Ascending aorta (tissue), 2 donors: ENCODE measurements at regions of chr17 and their contacts with region 1.

Region 1: DNA sequence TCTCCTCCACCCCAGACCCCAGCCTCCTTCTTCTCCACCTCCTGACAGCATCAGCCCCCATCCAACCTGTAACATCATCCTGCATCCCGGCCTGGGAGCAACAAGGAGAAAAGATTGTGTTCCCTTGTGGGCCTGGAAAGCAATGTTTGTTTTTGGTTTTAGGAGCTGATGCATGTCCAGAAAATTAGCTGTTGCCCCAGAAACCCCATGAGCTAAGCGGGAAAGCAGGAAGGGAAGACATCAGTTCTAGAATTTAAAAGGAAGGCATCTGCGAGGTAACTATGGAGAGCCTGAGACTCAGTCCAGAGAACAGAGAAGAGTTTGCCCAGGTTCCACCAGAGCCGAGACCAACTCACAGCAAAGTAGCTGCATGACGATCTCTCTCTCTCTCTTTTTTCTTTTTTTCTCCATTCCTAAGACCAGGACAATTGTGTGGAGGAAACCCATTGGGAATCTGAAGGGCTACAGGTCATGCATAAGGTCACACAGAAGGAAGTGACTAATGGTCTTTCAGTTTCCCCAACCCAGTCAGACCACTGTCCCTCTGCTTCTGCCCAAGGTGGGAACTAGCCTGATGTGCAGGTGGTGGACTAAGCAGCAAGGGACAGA is 124.4 kb downstream of the SLC39A11 start:
- DNase-seq: no peak
- H3K4me3 ChIP-seq: no peak overlapping the region
- H3K27ac ChIP-seq: no peak overlapping the region
- H3K4me1 ChIP-seq: no peaks in the 10 kb centered on the region
- H3K27me3 ChIP-seq: no peaks in the 10 kb centered on the region
- CTCF ChIP-seq: no peak

Region 2: GRCh38 chr17:73028299-73028755 is 60.2 kb after region 1 on chr17:
- intact Hi-C with region 1: loop called (anchors 10 kb)
- DNase-seq: no peak
- H3K4me3 ChIP-seq: no peak overlapping the region
- H3K27ac ChIP-seq: no peak overlapping the region
- H3K4me1 ChIP-seq: no peaks in the 10 kb centered on the region
- H3K27me3 ChIP-seq: no peaks in the 10 kb centered on the region
- CTCF ChIP-seq: no peak

Region 3: GRCh38 chr17:73096866-73097265 is 128.8 kb after region 1 on chr17:
- intact Hi-C with region 1: no loop called
- DNase-seq: peak; percentile 36 to 78
- H3K4me3 ChIP-seq: no peak overlapping the region
- H3K27ac ChIP-seq: peak overlapping the region; percentile 55 to 68
- H3K4me1 ChIP-seq: peaks cover 0 to 13% of the 10 kb centered on the region in 2 donors
- H3K27me3 ChIP-seq: no peaks in the 10 kb centered on the region
- CTCF ChIP-seq: no peak

Region 4: DNA sequence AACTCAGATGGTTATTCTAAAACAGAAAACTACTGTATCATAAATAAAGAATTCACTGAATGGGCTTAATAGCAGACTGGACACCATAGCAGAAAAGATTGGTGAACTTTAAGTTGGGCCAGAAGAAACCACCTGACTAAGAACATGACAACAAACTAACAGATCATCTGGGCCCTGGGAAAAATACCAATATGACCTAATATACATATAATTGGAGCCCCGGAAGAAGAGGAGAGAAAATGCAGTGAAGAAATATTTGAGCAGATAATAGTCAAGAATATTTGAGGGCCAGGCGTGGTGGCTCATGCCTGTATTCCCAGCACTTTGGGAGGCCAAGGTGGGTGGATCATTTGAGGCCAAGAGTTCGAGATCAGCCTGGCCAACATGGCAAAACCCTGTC is 701.7 kb after region 1 on chr17:
- intact Hi-C with region 1: no loop called
- DNase-seq: no peak
- H3K4me3 ChIP-seq: no peak overlapping the region
- H3K27ac ChIP-seq: no peak overlapping the region
- H3K4me1 ChIP-seq: no peaks in the 10 kb centered on the region
- H3K27me3 ChIP-seq: no peaks in the 10 kb centered on the region
- CTCF ChIP-seq: no peak